K562 (cell line): ENCODE measurements at regions of chr11 and their contacts with region 1.

Region 1: GRCh38 chr11:75562048-75562835 is at the start of gene SERPINH1:
- DNase-seq: peak; percentile 84 to 93 (median 88)
- ATAC-seq: peak; percentile 86
- H3K4me3 ChIP-seq: peak within 1 kb of the TSS; percentile 64
- H3K27ac ChIP-seq: peak within 1 kb of the TSS; percentile 77
- H3K4me1 ChIP-seq: peaks cover 58 to 69% of the 10 kb centered on the region in 2 experiments
- H3K27me3 ChIP-seq: no peaks in the 10 kb centered on the region
- CTCF ChIP-seq: 0 out of 6 replicates have a peak, but pooled peaks of 1 of the 3 experiments have one; percentile 7
- EP300 ChIP-seq: no peak; the same call in 1 of the 2 replicates
- POLR2A ChIP-seq: peak; percentile 97
- RAD21 ChIP-seq: no peak
- polyA plus RNA-seq, gene SERPINH1: 2.8 to 6.8 TPM

Region 2: DNA sequence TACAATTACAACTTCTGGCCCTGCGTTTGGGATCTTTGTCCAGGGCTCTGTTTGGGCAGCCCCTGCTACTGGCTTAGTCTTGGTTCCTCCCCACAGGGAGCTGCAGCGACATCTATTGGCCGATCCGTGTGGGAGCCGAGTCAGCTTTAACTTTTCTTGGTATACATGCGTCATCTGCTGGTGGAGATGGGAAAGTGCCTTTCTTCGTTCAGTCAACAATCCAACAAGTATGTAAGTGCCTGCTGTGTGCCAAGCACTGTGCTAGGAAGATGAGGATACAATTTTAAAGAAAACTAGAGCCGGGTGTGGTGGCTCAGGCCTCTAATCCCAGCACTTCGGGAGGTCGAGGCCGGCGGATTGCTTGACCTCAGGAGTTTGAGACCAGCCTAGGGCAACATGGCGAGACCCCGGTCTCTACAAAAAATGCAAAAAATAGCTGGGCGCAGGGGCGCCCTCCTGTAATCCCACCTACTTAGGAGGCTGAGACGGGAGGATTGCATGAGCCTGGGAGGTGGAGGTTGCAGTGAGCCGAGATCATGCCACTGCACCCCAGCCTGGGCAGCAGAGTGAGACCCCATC is 313.5 kb before region 1 on chr11:
- CTCF ChIA-PET with region 1: no interaction called
- POLR2A ChIA-PET with region 1: no interaction called
- in situ Hi-C with region 1: no loop called
- intact Hi-C with region 1: no loop called
- DNase-seq: peak; percentile 82 to 94 (median 86)
- ATAC-seq: peak; percentile 95
- H3K4me3 ChIP-seq: no peak overlapping the region
- H3K27ac ChIP-seq: no peak overlapping the region
- H3K4me1 ChIP-seq: no peaks in the 10 kb centered on the region; a peak in 1 of 5 replicates
- H3K27me3 ChIP-seq: peaks cover 6 to 8% of the 10 kb centered on the region in 2 experiments
- CTCF ChIP-seq: peak; percentile 100
- EP300 ChIP-seq: no peak
- POLR2A ChIP-seq: no peak
- RAD21 ChIP-seq: peak; percentile 99 to 100

Region 3: GRCh38 chr11:75577207-75577606 is 15.0 kb after region 1 on chr11:
- CTCF ChIA-PET with region 1: interaction called, 3 read pairs
- POLR2A ChIA-PET with region 1: interaction called, 115 read pairs
- in situ Hi-C with region 1: no loop called
- intact Hi-C with region 1: no loop called
- DNase-seq: peak; percentile 72 to 85 (median 80)
- ATAC-seq: peak; percentile 69
- H3K4me3 ChIP-seq: no peak overlapping the region
- H3K27ac ChIP-seq: no peak overlapping the region
- H3K4me1 ChIP-seq: peaks cover 8 to 12% of the 10 kb centered on the region in 2 experiments
- H3K27me3 ChIP-seq: no peaks in the 10 kb centered on the region
- CTCF ChIP-seq: peak; percentile 51 to 66 (median 54)
- EP300 ChIP-seq: no peak
- POLR2A ChIP-seq: no peak
- RAD21 ChIP-seq: peak in 1 of 2 experiments; percentile 26; a peak in 2 of 4 replicates